ENCODE measurements at regions of chr5 and their contacts with region 1.

Region 1: GRCh38 chr5:179763215-179763945 is 30.4 kb upstream of the LTC4S start:
- DNase-seq: peak; percentile 70
- ATAC-seq: peak; percentile 30
- H3K4me3 Mint-ChIP-seq: no peak overlapping the region
- H3K27ac Mint-ChIP-seq: no peak overlapping the region
- H3K4me1 Mint-ChIP-seq: peaks cover 79% of the 10 kb centered on the region
- H3K27me3 Mint-ChIP-seq: no peaks in the 10 kb centered on the region

Region 2: DNA sequence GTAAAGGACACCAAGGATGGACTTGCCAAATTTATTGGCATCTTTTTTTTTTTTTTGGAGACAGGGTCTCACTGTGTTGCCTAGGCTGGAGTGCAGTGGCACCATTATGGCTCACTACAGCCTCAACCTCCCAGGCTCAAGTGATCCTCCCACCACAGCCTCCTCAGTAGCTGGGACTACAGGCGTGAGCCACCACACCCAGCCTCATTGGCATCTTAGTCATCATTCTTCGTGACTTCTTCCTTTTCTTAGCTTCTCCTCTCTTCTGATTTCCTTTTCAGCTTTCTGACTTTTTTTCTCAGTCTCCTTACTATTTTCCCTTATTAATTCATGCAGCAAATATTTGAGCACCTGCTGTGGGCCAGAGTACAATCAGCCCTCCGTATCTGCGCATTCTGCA is 24.6 kb before region 1 on chr5:
- CTCF ChIA-PET with region 1: interaction called, 14 read pairs
- POLR2A ChIA-PET with region 1: interaction called, 11 read pairs
- intact Hi-C with region 1: no loop called
- DNase-seq: no peak
- ATAC-seq: no peak
- H3K4me3 Mint-ChIP-seq: no peak overlapping the region
- H3K27ac Mint-ChIP-seq: peak overlapping the region; percentile 45
- H3K4me1 Mint-ChIP-seq: peaks cover 57% of the 10 kb centered on the region
- H3K27me3 Mint-ChIP-seq: no peaks in the 10 kb centered on the region

Region 3: GRCh38 chr5:179749857-179750508 is 13.4 kb before region 1 on chr5:
- CTCF ChIA-PET with region 1: interaction called, 13 read pairs
- POLR2A ChIA-PET with region 1: interaction called, 3 read pairs
- intact Hi-C with region 1: no loop called
- DNase-seq: no peak
- ATAC-seq: no peak
- H3K4me3 Mint-ChIP-seq: no peak overlapping the region
- H3K27ac Mint-ChIP-seq: no peak overlapping the region
- H3K4me1 Mint-ChIP-seq: peaks cover 33% of the 10 kb centered on the region
- H3K27me3 Mint-ChIP-seq: no peaks in the 10 kb centered on the region

Region 4: GRCh38 chr5:179777909-179778308 is 14.5 kb after region 1 on chr5:
- CTCF ChIA-PET with region 1: interaction called, 12 read pairs
- POLR2A ChIA-PET with region 1: no interaction called
- intact Hi-C with region 1: no loop called
- DNase-seq: no peak
- ATAC-seq: no peak
- H3K4me3 Mint-ChIP-seq: no peak overlapping the region
- H3K27ac Mint-ChIP-seq: no peak overlapping the region
- H3K4me1 Mint-ChIP-seq: no peaks in the 10 kb centered on the region
- H3K27me3 Mint-ChIP-seq: no peaks in the 10 kb centered on the region

Region 5: GRCh38 chr5:179795863-179796833 is 32.8 kb after region 1 on chr5:
- CTCF ChIA-PET with region 1: interaction called, 14 read pairs
- POLR2A ChIA-PET with region 1: no interaction called
- intact Hi-C with region 1: loop called (anchors 1 to 2 kb)
- DNase-seq: peak; percentile 87
- ATAC-seq: peak; percentile 80
- H3K4me3 Mint-ChIP-seq: peak overlapping the region; percentile 64
- H3K27ac Mint-ChIP-seq: no peak overlapping the region
- H3K4me1 Mint-ChIP-seq: peaks cover 25% of the 10 kb centered on the region
- H3K27me3 Mint-ChIP-seq: no peaks in the 10 kb centered on the region

Region 6: DNA sequence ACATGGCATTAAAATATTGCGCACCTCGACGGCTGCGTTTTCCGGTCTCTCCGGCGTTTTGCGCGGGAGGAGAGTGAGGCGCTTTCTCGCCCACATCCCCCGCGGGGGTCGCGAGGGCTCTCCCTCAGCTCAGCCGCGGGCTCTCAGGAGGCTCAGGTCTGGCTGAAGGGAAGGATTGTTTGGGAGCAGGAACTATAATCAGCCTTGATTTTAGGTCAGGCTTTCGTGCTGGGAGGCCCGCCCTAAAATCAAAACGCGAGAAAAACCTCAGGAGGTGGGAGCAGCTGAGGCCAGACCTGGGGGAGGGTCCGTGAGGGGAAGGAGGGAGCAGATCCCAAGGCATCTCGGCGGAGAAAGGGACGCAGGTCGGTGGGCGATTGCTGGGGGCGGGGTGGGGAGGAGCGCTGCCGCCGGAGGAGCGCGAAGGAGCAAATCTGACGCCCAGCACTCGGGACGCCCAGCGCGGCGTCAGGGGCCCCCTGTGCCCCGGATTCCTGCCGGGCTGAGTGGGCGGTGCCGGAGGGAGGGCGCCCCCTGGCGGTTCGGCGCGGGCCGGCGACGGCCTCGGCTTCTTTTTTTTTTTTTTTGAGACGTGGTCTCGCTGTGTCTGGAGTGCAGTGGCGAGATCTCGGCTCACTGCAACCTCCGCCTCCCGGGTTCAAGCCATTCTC is 326.9 kb after region 1 on chr5:
- CTCF ChIA-PET with region 1: interaction called, 3 read pairs
- POLR2A ChIA-PET with region 1: no interaction called
- intact Hi-C with region 1: loop called in 1 of 2 experiments (anchors 1 kb)
- DNase-seq: peak; percentile 89
- ATAC-seq: peak; percentile 85
- H3K4me3 Mint-ChIP-seq: peak overlapping the region; percentile 74
- H3K27ac Mint-ChIP-seq: peak overlapping the region; percentile 67
- H3K4me1 Mint-ChIP-seq: peaks cover 24% of the 10 kb centered on the region
- H3K27me3 Mint-ChIP-seq: no peaks in the 10 kb centered on the region

Measured in activated CD4-positive, alpha-beta T cell treated with anti-CD3 and anti-CD28 coated beads for 36 hours (primary cell).